ENCODE measurements at regions of chr12 and their contacts with region 1.

Region 1: GRCh38 chr12:112777387-112778310 is 13.9 kb upstream of the RPH3A start:
- DNase-seq: no peak
- H3K4me3 ChIP-seq: no peak overlapping the region
- H3K27ac ChIP-seq: no peak overlapping the region
- H3K4me1 ChIP-seq: no peaks in the 10 kb centered on the region
- H3K27me3 ChIP-seq: no peaks in the 10 kb centered on the region
- CTCF ChIP-seq: no peak
- POLR2A ChIP-seq: no peak

Region 2: GRCh38 chr12:112759789-112760188 is 17.9 kb before region 1 on chr12:
- CTCF ChIA-PET with region 1: no interaction called
- POLR2A ChIA-PET with region 1: no interaction called
- dilution Hi-C with region 1: no loop called
- intact Hi-C with region 1: no loop called
- DNase-seq: no peak
- H3K4me3 ChIP-seq: no peak overlapping the region
- H3K27ac ChIP-seq: no peak overlapping the region
- H3K4me1 ChIP-seq: no peaks in the 10 kb centered on the region
- H3K27me3 ChIP-seq: no peaks in the 10 kb centered on the region
- CTCF ChIP-seq: no peak
- POLR2A ChIP-seq: no peak

Region 3: GRCh38 chr12:112986291-112986800 is 208.7 kb after region 1 on chr12:
- CTCF ChIA-PET with region 1: no interaction called
- POLR2A ChIA-PET with region 1: interaction called, 12 read pairs
- dilution Hi-C with region 1: no loop called
- intact Hi-C with region 1: no loop called
- DNase-seq: no peak
- H3K4me3 ChIP-seq: no peak overlapping the region
- H3K27ac ChIP-seq: no peak overlapping the region
- H3K4me1 ChIP-seq: no peaks in the 10 kb centered on the region
- H3K27me3 ChIP-seq: peaks cover 0 to 4% of the 10 kb centered on the region in 2 experiments
- CTCF ChIP-seq: no peak
- POLR2A ChIP-seq: no peak